HCT116 (cell line): ENCODE measurements at regions of chr14 and their contacts with region 1.

Region 1: DNA sequence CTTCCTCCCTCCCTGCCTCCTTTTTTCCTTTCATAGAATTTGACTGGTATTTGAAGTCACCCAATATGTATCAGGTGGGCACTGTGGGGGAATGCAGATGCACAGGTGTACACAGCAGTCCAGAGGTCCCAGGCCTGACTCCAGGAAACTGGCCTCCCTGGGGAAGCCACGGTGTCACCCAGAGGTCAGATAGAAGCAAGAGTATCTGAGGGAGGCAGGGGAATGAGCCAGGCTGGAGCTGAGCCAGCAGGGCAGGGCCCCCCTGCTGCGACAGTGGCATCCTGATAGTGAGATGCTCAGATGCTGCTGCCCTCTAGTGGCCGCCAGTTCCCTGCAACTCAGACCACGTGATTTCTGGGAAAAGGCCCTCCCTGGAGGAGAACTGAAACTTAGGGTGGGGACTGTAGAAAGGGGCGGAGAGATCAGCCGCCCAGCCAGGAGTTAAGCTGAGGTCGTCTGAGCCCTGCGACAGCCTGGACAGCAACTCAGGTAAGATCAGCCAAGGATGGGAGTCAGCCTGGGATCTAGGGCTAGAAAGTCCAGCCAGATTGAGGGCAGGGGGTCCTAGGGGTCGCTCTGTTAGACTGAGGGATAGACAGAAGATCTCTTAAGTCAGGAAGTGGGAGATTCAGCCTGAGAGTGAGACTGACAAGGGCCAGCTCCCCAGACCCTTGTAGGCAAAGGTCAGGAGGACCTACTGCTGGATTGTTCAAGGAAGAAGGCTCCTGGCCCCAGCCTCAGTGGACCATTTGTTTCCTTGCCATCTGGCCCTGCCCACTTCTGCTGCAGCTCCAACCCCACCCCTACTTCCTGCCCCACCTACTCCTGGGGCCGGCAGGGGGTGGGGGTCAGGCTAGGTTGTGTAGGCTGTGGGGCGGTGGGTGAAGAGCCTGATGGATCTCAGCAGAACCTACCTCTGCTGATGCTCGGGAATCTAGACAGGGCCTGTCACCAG is at the start of gene IRF9:
- DNase-seq: peak; percentile 89
- ATAC-seq: peak; percentile 95
- H3K4me3 ChIP-seq: peak within 1 kb of the TSS; percentile 58 to 60
- H3K27ac ChIP-seq: peak within 1 kb of the TSS; percentile 84
- H3K4me1 ChIP-seq: peaks cover 15 to 21% of the 10 kb centered on the region in 2 experiments
- H3K27me3 ChIP-seq: no peaks in the 10 kb centered on the region
- CTCF ChIP-seq: peak; percentile 77 to 94 (median 87)
- POLR2A ChIP-seq: peak; percentile 53
- RAD21 ChIP-seq: peak; percentile 85
- total RNA-seq, gene IRF9: 21.7 TPM

Region 2: GRCh38 chr14:24058260-24058950 is 102.7 kb before region 1 on chr14:
- CTCF ChIA-PET with region 1: interaction called, 20 read pairs
- POLR2A ChIA-PET with region 1: interaction called, 3 read pairs
- RAD21 ChIA-PET with region 1: interaction called in 1 of 2 experiments, 3 read pairs
- intact Hi-C with region 1: loop called (anchors 1 kb)
- DNase-seq: no peak
- ATAC-seq: peak; percentile 92
- H3K4me3 ChIP-seq: no peak overlapping the region
- H3K27ac ChIP-seq: no peak overlapping the region
- H3K4me1 ChIP-seq: peaks cover 0 to 3% of the 10 kb centered on the region in 2 experiments; a peak in 1 of 4 replicates
- H3K27me3 ChIP-seq: no peaks in the 10 kb centered on the region
- CTCF ChIP-seq: peak; percentile 72 to 89 (median 87); a peak in 5 of 6 replicates
- POLR2A ChIP-seq: no peak
- RAD21 ChIP-seq: peak; percentile 95

Region 3: GRCh38 chr14:24141097-24141880 is 19.8 kb before region 1 on chr14 and contains the start of gene EMC9:
- CTCF ChIA-PET with region 1: interaction called, 19 read pairs
- POLR2A ChIA-PET with region 1: interaction called, 18 read pairs
- RAD21 ChIA-PET with region 1: no interaction called
- intact Hi-C with region 1: no loop called
- DNase-seq: peak; percentile 99
- ATAC-seq: peak; percentile 88
- H3K4me3 ChIP-seq: peak within 1 kb of the TSS; percentile 66 to 87
- H3K27ac ChIP-seq: peak within 1 kb of the TSS; percentile 91
- H3K4me1 ChIP-seq: peaks cover 26 to 50% of the 10 kb centered on the region in 2 experiments
- H3K27me3 ChIP-seq: no peaks in the 10 kb centered on the region
- CTCF ChIP-seq: peak in 1 of 3 experiments; percentile 62; a peak in 3 of 6 replicates
- POLR2A ChIP-seq: peak; percentile 96
- RAD21 ChIP-seq: no peak
- total RNA-seq, gene EMC9: 42.0 TPM

Region 4: GRCh38 chr14:24146978-24147760 is 14.0 kb before region 1 on chr14 and contains the start of gene RNF31:
- CTCF ChIA-PET with region 1: interaction called, 19 read pairs
- POLR2A ChIA-PET with region 1: interaction called, 18 read pairs
- RAD21 ChIA-PET with region 1: interaction called in 1 of 2 experiments, 3 read pairs
- intact Hi-C with region 1: no loop called
- DNase-seq: peak; percentile 96
- ATAC-seq: peak; percentile 88
- H3K4me3 ChIP-seq: peak within 1 kb of the TSS; percentile 97 to 99
- H3K27ac ChIP-seq: peak within 1 kb of the TSS; percentile 95
- H3K4me1 ChIP-seq: peaks cover 17 to 23% of the 10 kb centered on the region in 2 experiments
- H3K27me3 ChIP-seq: no peaks in the 10 kb centered on the region
- CTCF ChIP-seq: no peak
- POLR2A ChIP-seq: no peak
- RAD21 ChIP-seq: no peak
- total RNA-seq, gene RNF31: 78.0 TPM